Endothelial cell of umbilical vein (primary cell): ENCODE measurements at regions of chr5 and their contacts with region 1.

Region 1: DNA sequence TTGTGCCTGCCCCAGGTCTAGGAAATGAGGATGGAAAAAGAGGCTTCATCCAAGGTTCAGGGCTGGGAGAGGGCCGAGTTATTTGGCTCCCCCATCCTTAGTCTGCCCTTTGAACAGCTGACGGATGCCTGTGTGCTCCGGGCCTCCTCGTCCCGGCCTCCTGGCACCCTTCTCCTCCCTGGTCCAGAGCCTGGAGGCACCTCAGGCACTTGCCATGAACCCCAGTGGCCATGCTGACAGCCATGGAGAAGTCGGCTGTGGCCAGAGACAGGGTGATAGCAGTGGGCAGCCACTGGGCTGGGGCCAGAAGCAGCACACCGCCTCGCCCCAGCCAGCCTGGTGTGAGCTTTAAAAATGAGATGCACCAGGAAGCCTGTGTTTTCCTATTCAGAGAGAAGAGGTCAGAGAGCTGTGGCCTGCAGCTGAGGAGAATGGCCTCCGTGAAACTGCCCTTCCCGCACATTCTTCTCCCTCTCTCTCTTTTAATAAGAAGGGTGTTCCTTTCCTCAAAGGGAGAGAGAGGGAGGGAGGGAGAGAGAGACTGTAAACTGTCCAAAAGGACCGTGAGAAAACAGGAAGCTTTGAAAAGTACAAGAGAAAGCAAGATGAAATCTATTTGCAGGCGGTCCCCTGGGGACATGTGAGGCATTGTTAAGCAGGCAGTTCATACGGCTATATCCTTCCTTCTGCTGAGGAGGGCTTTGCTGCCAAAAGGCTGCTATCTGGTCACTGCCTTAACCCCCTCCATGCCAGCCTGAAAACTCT is 55.3 kb downstream of the ZNF366 start:
- DNase-seq: peak; percentile 98
- H3K4me3 ChIP-seq: no peak overlapping the region
- H3K27ac ChIP-seq: peak overlapping the region; percentile 100
- H3K4me1 ChIP-seq: peaks cover 49% of the 10 kb centered on the region
- H3K27me3 ChIP-seq: no peaks in the 10 kb centered on the region
- CTCF ChIP-seq: no peak
- POLR2A ChIP-seq: peak; percentile 48

Region 2: DNA sequence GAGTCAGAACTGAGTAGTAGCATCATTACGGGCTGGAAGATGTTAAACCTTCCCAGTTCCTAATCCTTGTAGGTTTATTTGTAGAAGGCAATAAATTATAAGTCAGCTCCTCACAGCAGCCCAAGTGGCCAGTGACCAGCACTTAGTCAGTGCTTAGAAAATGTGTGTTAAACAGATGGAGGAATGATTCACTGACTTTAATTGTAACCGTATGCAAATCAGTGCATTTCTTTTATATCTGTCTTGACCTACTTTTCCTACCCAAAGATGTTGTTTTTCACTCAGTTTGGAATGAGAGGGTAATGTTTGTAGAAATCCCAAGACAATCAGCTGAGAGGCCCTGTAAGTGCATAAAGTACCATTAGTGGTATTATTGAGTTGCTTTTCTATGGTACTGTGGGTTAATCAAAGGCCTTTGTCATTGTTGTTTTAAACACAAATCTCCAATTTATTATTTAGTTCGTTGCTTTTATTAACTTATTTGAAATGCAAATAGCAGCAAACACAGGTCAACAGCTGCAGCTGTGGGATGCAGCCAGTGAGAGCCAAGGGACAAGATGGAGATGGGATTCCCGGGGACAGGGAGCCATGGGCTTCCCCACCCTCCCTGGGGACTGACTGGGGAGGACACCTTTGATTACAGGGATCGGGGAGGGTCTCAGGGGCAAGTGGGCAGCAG is 294.8 kb before region 1 on chr5:
- CTCF ChIA-PET with region 1: no interaction called
- POLR2A ChIA-PET with region 1: no interaction called
- dilution Hi-C with region 1: no loop called
- intact Hi-C with region 1: no loop called
- DNase-seq: peak; percentile 61
- H3K4me3 ChIP-seq: no peak overlapping the region
- H3K27ac ChIP-seq: peak overlapping the region; percentile 12
- H3K4me1 ChIP-seq: peaks cover 55% of the 10 kb centered on the region
- H3K27me3 ChIP-seq: no peaks in the 10 kb centered on the region
- CTCF ChIP-seq: no peak
- POLR2A ChIP-seq: no peak

Region 3: DNA sequence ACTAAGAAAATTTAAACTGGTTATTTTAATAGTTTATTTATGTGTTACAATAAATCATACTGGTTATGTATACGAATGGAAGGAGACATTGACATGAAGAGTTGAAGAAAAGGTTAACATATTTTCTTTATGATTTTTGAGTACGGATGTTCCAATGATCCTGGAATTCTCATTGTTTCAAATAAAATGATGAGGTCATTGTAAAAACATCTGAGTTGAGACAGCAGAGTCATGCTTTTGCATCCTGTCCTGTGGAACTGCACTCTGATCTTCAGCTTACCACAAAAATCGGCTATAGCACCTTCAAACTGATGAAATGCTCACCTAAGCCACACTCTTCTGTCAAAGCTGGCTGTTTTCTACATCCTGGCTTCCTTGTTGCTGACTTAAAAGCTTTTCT is 63.9 kb before region 1 on chr5:
- CTCF ChIA-PET with region 1: interaction called, 10 read pairs
- POLR2A ChIA-PET with region 1: interaction called, 6 read pairs
- dilution Hi-C with region 1: no loop called
- intact Hi-C with region 1: loop called (anchors 1 kb)
- DNase-seq: peak; percentile 90
- H3K4me3 ChIP-seq: no peak overlapping the region
- H3K27ac ChIP-seq: peak overlapping the region; percentile 97
- H3K4me1 ChIP-seq: peaks cover 43% of the 10 kb centered on the region
- H3K27me3 ChIP-seq: no peaks in the 10 kb centered on the region
- CTCF ChIP-seq: no peak
- POLR2A ChIP-seq: no peak

Region 4: DNA sequence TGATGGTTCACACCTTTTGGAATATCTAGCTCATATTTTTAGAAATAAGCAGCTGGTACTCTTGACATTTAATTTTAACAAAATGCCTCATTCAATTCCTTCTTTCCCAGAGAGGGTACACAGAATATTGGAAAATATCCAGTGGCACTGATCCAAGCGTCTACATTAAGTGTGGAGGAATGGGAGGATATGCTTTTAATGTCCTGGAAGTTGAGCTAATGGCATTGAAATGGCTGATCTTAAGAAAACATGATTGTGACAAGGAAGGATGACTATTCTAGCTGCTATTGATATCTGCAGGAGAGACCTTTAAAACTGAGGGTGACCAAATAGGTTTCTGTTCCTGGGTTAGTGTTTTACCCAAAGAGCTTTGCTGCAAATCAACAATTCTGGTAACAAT is 25.3 kb after region 1 on chr5:
- CTCF ChIA-PET with region 1: interaction called, 7 read pairs
- POLR2A ChIA-PET with region 1: interaction called, 4 read pairs
- dilution Hi-C with region 1: no loop called
- intact Hi-C with region 1: loop called (anchors 1 kb)
- DNase-seq: peak; percentile 90
- H3K4me3 ChIP-seq: no peak overlapping the region
- H3K27ac ChIP-seq: peak overlapping the region; percentile 53
- H3K4me1 ChIP-seq: peaks cover 25% of the 10 kb centered on the region
- H3K27me3 ChIP-seq: no peaks in the 10 kb centered on the region
- CTCF ChIP-seq: no peak
- POLR2A ChIP-seq: peak; percentile 36

Region 5: DNA sequence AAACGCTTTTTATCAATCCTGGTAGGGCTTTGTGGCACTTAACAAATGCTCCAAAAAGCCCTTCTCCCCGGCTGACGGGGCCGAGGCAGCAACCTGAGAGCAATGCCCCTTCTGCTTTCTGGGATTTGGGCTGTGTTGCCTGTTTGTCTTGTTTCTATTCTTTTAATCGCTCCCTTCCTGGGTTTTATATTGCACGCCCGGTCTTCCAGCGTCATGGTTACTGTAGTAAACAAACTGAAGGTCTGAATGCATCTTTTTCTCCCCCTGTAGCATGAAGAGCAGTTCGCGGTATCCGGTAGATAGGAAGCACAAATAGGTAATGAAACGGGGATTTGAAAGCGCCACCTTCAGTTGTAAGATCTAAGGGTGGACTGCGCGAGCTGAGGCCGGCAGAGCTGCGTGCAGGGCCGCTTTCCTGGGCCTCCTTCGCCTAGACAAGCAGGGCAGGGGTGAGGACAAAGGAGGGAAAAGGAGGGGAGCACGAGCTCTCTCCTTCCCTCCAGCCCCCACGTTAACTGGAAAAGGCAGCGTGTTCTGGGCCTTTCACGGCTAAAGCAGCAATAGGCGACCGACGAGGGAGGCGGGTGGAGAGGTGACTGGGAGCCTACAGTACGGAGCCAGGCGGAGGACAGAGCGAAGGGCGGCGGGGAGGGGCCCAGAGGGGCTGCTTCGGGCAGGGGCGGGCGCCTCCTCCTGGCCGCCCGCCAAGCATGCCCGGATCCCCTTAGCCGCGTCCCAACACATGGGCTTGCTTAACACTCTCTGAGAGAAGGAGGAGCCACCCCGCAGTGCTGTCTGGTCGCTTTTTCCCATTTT is 104.6 kb after region 1 on chr5:
- CTCF ChIA-PET with region 1: interaction called, 5 read pairs
- POLR2A ChIA-PET with region 1: interaction called, 4 read pairs
- dilution Hi-C with region 1: no loop called
- intact Hi-C with region 1: loop called (anchors 1 kb)
- DNase-seq: peak; percentile 85
- H3K4me3 ChIP-seq: peak overlapping the region in 1 of 3 experiments; percentile 4
- H3K27ac ChIP-seq: peak overlapping the region; percentile 97
- H3K4me1 ChIP-seq: peaks cover 83% of the 10 kb centered on the region
- H3K27me3 ChIP-seq: no peaks in the 10 kb centered on the region
- CTCF ChIP-seq: no peak
- POLR2A ChIP-seq: peak; percentile 92

Region 6: GRCh38 chr5:72611118-72611730 is 159.3 kb after region 1 on chr5:
- CTCF ChIA-PET with region 1: interaction called, 10 read pairs
- POLR2A ChIA-PET with region 1: no interaction called
- dilution Hi-C with region 1: no loop called
- intact Hi-C with region 1: no loop called
- DNase-seq: peak; percentile 85
- H3K4me3 ChIP-seq: no peak overlapping the region
- H3K27ac ChIP-seq: peak overlapping the region; percentile 23
- H3K4me1 ChIP-seq: peaks cover 5% of the 10 kb centered on the region
- H3K27me3 ChIP-seq: no peaks in the 10 kb centered on the region
- CTCF ChIP-seq: peak; percentile 98
- POLR2A ChIP-seq: no peak